Astrocyte of the cerebellum (primary cell): ENCODE measurements at regions of chr4 and their contacts with region 1.

Region 1: DNA sequence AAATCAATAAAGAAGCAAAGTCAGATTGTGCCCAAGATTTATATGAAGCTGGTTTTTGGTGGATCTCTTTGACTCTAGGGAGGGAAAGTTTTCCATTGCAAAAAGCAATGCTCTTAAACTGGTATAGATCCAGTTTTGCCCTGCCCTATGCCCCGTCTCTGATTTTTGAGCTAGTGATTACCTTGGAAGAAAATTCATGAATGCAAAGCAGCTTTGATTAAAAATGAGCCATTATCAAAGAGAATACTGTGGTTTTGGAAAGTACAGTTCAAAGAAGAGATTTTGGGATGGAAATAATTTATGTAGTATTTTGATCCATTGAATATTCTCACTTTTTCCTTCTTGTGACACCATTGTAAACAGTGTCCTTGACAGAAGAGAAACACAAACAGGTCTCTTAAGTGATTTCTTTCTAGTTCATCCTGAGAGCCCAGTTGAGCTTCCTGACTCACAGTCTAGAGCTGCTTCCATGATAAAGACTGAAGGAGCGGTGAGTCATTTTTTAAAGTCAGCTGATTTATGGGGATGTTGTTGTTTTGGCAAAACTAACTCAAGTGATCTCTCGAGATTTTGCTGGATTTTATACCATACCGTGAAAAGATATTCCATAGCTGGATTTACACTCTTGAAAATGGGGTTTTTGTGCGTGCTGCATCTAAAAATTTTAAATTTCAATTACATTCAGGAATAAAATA is 76.7 kb downstream of the AFF1 start:
- DNase-seq: peak; percentile 53
- H3K4me3 ChIP-seq: no peak overlapping the region
- CTCF ChIP-seq: no peak

Region 2: GRCh38 chr4:86924811-86925210 is 86.7 kb before region 1 on chr4:
- in situ Hi-C with region 1: loop called (anchors 5 kb)
- DNase-seq: no peak
- H3K4me3 ChIP-seq: no peak overlapping the region
- CTCF ChIP-seq: no peak